Activated naive CD4-positive, alpha-beta T cell treated with anti-CD3 and anti-CD28 coated beads for 36 hours (primary cell): ENCODE measurements at regions of chr14 and their contacts with region 1.

Region 1: GRCh38 chr14:60248697-60249318 is at the start of gene PPM1A:
- DNase-seq: peak; percentile 94
- H3K4me3 Mint-ChIP-seq: peak within 1 kb of the TSS; percentile 94
- H3K27ac Mint-ChIP-seq: peak within 1 kb of the TSS; percentile 100
- H3K4me1 Mint-ChIP-seq: peaks cover 52% of the 10 kb centered on the region
- H3K27me3 Mint-ChIP-seq: no peaks in the 10 kb centered on the region
- total RNA-seq, gene PPM1A: 35.3 to 36.1 TPM

Region 2: DNA sequence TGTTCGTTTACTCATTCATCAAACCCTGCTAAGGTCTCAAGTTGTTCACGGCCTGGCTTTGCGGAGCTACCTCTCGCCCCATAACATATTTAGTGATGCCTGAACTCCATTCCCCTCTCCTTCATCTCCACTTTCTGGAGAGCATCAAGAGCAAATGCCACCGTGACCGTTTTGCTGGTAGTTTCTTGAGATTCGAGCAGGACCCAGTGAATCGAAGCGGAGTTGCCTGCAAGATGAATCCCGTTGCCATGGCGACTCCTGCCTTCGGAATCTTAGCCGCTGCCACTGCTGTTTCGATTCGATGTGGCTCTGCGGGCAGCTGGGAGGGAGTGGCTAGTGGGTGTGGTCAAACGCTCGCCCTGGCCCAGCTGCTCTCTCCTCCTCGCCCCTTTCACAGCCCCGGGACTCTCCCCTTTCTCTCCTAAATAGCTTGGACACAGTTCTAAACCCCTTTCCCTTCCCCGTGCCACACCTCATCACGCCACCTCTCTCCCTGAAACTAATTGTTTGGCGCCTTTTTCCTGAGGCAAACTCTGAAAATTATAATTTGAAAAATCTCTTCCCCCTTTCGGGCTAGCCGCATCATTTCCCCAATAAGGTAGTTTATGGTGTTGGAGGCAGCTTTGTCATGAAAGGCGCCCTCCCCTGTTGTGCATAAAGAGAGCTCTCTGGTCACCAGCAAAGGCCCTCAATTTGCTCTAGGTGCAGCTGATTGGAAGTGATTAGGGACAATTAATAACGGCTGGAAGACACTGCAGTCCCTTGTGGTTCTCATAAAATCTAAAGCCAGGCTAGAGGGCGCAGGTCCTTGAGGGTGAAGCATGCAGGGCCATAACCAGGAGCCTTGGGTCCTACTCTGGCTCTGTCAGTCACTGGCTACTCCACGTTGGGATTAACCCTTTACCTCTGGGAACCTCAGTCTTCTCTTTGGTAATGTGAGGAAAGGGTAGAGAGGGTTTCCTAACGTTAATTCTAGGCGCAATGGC is 1058.7 kb before region 1 on chr14:
- CTCF ChIA-PET with region 1: no interaction called
- intact Hi-C with region 1: loop called (anchors 1 kb)
- DNase-seq: peak; percentile 77
- H3K4me3 Mint-ChIP-seq: peak overlapping the region; percentile 91
- H3K27ac Mint-ChIP-seq: no peak overlapping the region
- H3K4me1 Mint-ChIP-seq: peaks cover 13% of the 10 kb centered on the region
- H3K27me3 Mint-ChIP-seq: no peaks in the 10 kb centered on the region

Region 3: GRCh38 chr14:59964251-59965007 is 284.4 kb before region 1 on chr14:
- CTCF ChIA-PET with region 1: no interaction called
- intact Hi-C with region 1: loop called (anchors 1 kb)
- DNase-seq: no peak
- H3K4me3 Mint-ChIP-seq: peak overlapping the region; percentile 71
- H3K27ac Mint-ChIP-seq: peak overlapping the region; percentile 5
- H3K4me1 Mint-ChIP-seq: peaks cover 12% of the 10 kb centered on the region
- H3K27me3 Mint-ChIP-seq: no peaks in the 10 kb centered on the region

Region 4: DNA sequence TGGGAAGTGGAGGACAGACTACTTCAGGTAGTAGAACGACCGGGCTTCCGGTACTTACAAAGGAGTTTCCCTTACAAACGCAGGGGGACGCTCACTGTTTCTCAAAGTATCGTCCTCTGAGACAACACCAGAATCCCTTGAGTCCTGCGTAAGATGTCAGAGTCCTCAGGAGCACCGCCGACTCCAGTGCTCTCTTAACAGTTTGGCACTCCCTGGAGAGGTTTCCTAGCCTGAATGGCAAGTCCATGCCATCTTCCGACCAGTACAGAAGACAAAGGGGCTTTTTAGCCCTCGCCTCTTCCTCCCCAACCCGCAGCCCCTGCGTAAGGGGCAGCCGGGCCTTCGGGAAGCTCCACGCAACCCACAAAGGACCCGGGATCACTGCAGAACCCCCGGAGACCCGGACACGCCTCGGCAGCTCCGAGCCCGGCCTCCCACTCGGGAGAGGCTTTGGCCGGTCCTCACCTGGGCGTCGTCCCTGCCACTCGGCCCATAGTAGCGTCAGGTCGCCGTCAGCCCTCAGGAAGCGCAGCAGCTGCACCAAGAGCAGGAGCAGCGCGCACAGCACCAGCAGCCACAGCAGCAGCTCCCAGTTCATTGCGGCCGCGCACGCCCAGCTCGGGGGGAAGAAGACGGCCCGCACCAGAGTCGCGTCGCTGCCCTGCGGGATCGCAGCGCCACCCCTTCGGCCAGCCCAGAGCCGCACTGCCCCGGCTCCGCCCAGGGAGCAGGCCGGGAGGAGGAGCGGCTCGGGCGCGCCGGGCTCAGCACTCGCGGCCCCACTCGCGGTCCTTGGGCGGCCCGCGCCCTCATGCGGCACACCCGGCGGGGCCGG is 83.9 kb before region 1 on chr14 and contains the start of gene DHRS7:
- CTCF ChIA-PET with region 1: interaction called, 3 read pairs
- intact Hi-C with region 1: loop called (anchors 1 kb)
- DNase-seq: peak; percentile 65
- H3K4me3 Mint-ChIP-seq: peak within 1 kb of the TSS; percentile 89
- H3K27ac Mint-ChIP-seq: peak within 1 kb of the TSS; percentile 96
- H3K4me1 Mint-ChIP-seq: peaks cover 39% of the 10 kb centered on the region
- H3K27me3 Mint-ChIP-seq: no peaks in the 10 kb centered on the region
- total RNA-seq, gene DHRS7: 40.5 to 43.4 TPM

Region 5: DNA sequence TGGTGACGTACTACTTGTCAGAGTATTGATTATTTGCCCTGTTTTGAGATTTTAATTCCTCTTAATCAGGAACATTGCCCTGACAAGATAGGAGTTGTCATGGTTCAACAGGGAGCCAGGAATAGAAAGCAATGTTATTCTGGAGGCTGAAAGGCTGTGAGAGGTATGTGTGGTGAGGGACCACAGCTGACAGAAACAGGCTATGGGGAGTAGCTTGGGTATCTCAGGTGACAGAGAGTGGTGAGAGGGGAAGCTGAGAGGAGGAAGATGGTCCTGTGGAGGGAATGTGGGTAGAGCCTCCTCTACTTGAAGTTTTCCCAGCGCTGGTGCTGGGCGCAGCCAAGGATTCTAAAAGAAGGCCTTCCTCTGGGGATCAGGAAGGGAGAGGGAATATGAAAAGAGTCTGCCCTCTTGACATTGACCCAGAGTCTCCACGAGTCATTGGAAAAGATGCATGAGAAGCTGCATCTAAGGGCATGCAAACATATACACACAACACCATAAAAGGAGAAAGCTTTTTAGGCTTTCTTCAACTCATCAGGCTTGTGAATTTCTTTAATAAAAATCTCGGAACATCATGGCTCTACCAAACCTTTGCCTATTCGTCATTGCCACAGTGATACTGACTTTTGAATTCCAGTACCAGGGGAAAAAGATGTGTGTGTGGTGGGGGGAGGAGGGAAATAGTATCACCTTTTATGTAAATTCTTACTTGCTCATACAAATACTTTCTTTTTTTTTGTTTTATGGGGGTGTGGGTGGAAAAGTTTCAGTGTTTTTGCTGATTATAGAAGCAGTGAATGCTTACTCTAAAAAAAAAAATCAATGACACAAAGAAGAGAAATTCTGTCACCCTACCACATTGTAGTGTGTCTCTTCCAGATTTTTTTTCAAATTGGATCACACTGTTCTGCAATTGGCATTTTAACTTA is 43.7 kb before region 1 on chr14:
- CTCF ChIA-PET with region 1: interaction called, 3 read pairs
- intact Hi-C with region 1: loop called (anchors 1 kb)
- DNase-seq: no peak
- H3K4me3 Mint-ChIP-seq: no peak overlapping the region
- H3K27ac Mint-ChIP-seq: no peak overlapping the region
- H3K4me1 Mint-ChIP-seq: peaks cover 19% of the 10 kb centered on the region
- H3K27me3 Mint-ChIP-seq: peaks cover 18% of the 10 kb centered on the region

Region 6: DNA sequence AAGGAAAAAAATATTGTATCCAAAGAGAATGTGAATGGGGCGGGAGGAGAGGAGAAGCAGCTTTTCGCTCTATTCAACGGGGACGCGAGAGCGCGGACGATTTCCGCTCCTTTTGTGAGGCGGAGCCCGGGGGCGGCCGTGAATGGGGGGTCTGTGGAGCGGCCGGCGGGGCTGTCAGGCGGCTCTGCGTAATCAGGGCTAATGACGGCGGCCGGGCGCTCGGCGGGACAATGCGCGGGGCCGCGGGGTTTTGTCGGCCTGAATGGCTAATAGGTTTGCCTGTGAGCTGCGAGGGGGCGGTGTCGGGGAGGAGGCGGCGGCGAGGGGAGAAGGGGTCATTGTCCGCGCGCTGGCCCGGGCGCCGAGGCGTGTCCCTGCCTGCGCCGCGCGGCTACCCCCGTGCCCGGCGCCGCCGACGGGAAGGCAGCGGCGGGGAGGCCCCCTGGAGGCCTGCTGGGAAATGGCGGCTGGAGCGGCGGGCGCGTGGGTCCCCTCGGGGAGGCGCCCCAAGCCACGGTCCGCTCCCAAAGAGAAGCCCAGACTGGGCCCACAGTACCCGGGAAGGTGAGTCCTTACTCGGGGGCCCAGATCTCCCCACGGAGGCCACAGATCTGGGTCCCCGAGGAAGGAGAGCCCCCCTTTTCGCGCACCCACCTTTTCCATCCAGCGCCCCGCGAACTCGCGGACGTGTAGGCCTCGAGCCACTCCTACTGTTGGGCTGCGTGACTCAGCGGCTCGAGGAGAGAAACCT is 266.1 kb after region 1 on chr14:
- CTCF ChIA-PET with region 1: no interaction called
- intact Hi-C with region 1: loop called (anchors 5 kb)
- DNase-seq: no peak
- H3K4me3 Mint-ChIP-seq: peak overlapping the region; percentile 49
- H3K27ac Mint-ChIP-seq: no peak overlapping the region
- H3K4me1 Mint-ChIP-seq: peaks cover 19% of the 10 kb centered on the region
- H3K27me3 Mint-ChIP-seq: peaks cover 62% of the 10 kb centered on the region

Region 7: DNA sequence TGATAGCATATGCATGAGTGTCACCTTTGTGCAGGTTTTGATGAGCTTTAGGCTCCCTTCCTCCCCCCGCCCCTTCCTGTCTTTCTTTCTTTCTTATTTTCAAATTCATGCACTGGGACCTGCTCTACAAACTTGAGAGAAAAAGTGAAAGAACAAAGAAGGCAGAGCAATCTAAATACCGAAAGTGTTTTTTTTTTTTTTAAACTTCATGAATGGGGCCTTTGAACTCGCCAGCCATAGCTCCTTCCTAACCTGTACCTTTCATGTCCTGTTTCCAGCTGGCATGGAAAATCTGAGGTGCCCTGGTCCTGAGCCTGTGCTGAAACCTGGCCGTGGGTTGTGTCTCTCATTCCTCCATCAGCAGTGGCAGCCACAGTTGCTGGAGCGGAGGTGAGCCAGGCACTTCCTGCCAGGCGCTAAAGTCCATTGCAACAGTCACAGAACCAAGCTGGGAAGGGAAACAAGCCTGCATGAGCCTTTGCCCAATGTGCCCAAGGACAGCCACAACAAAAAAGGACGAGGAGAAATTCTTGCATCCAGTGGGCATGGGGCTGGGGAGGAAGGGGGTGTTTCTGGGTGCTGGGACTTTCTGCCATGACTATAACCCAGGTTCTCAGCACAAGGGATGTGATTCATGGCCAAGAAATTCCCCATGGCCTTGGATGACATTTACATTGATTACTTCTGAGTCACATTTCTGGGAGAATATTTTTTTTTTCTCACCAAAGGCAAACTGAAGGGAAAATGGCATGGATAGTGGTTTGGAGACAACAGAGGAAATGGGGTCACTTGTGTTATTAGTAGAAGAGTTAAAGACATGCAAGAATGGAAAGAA is 929.6 kb after region 1 on chr14:
- CTCF ChIA-PET with region 1: no interaction called
- intact Hi-C with region 1: loop called (anchors 5 kb)
- DNase-seq: peak; percentile 78
- H3K4me3 Mint-ChIP-seq: peak overlapping the region; percentile 41
- H3K27ac Mint-ChIP-seq: peak overlapping the region; percentile 94
- H3K4me1 Mint-ChIP-seq: peaks cover 57% of the 10 kb centered on the region
- H3K27me3 Mint-ChIP-seq: peaks cover 6% of the 10 kb centered on the region